Caco-2 (cell line): ENCODE measurements at regions of chr12 and their contacts with region 1.

Region 1: GRCh38 chr12:47346251-47347019 is 266.7 kb upstream of the AMIGO2 start:
- DNase-seq: peak; percentile 84 to 87
- H3K4me3 ChIP-seq: no peak overlapping the region
- H3K4me3 Mint-ChIP-seq: no peak overlapping the region
- H3K27ac Mint-ChIP-seq: peak overlapping the region; percentile 42
- H3K4me1 ChIP-seq: peaks cover 12% of the 10 kb centered on the region
- H3K4me1 Mint-ChIP-seq: peaks cover 9% of the 10 kb centered on the region
- H3K27me3 ChIP-seq: no peaks in the 10 kb centered on the region
- H3K27me3 Mint-ChIP-seq: no peaks in the 10 kb centered on the region
- CTCF ChIP-seq: no peak

Region 2: DNA sequence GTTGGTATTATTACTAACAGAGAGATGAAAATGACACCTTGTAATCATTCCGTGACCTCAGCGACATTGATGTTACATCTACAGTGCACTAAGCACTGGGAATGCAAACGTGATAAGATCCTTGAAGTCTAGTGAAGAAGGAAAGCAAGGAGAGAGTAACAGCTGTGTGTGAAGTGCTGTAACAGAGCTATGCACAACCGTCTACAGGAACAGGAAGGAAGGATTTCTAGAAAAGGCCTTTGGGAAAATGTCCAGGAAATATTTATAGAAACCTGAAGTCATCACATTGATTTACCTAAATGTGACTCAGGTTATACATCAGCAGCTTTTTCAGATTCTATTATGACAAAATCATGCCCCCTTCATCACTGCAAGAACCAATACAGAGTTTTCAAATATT is 37.5 kb after region 1 on chr12:
- CTCF ChIA-PET with region 1: no interaction called
- POLR2A ChIA-PET with region 1: no interaction called
- intact Hi-C with region 1: loop called (anchors 1 kb)
- DNase-seq: peak in 1 of 2 experiments; percentile 49
- H3K4me3 ChIP-seq: no peak overlapping the region
- H3K4me3 Mint-ChIP-seq: no peak overlapping the region
- H3K27ac Mint-ChIP-seq: no peak overlapping the region
- H3K4me1 ChIP-seq: peaks cover 12% of the 10 kb centered on the region; the same call in 1 of the 2 replicates
- H3K4me1 Mint-ChIP-seq: peaks cover 21% of the 10 kb centered on the region
- H3K27me3 ChIP-seq: no peaks in the 10 kb centered on the region; the same call in 1 of the 2 replicates
- H3K27me3 Mint-ChIP-seq: no peaks in the 10 kb centered on the region
- CTCF ChIP-seq: no peak